GM12878 (cell line): ENCODE measurements at regions of chr11 and their contacts with region 1.

Region 1: GRCh38 chr11:61792310-61793085 is at the starts of genes FEN1 and TMEM258:
- DNase-seq: peak; percentile 76
- ATAC-seq: peak; percentile 92
- H3K4me3 ChIP-seq: peak within 1 kb of the TSS; percentile 98
- H3K27ac ChIP-seq: peak within 1 kb of the TSS; percentile 100
- H3K4me1 ChIP-seq: no peaks in the 10 kb centered on the region; the same call in 1 of the 2 replicates
- H3K27me3 ChIP-seq: no peaks in the 10 kb centered on the region
- CTCF ChIP-seq: no peak
- EP300 ChIP-seq: no peak
- POLR2A ChIP-seq: peak; percentile 98
- RAD21 ChIP-seq: no peak
- polyA plus RNA-seq, gene FEN1: 54.8 to 99.9 TPM
- polyA plus RNA-seq, gene TMEM258: 800 to 840 TPM

Region 2: GRCh38 chr11:61654397-61654829 is 138.1 kb before region 1 on chr11:
- CTCF ChIA-PET with region 1: no interaction called
- POLR2A ChIA-PET with region 1: no interaction called
- RAD21 ChIA-PET with region 1: no interaction called
- SMC1A ChIA-PET with region 1: no interaction called
- in situ Hi-C with region 1: no loop called
- intact Hi-C with region 1: no loop called
- DNase-seq: no peak
- ATAC-seq: no peak; the same call in 2 of the 3 replicates
- H3K4me3 ChIP-seq: no peak overlapping the region
- H3K27ac ChIP-seq: no peak overlapping the region
- H3K4me1 ChIP-seq: no peaks in the 10 kb centered on the region
- H3K27me3 ChIP-seq: no peaks in the 10 kb centered on the region; a peak in 2 of 4 replicates
- CTCF ChIP-seq: no peak
- EP300 ChIP-seq: no peak
- POLR2A ChIP-seq: no peak
- RAD21 ChIP-seq: no peak

Region 3: GRCh38 chr11:61733120-61733978 is 59.1 kb before region 1 on chr11:
- CTCF ChIA-PET with region 1: interaction called, 16 read pairs
- POLR2A ChIA-PET with region 1: no interaction called
- RAD21 ChIA-PET with region 1: interaction called, 6 read pairs
- SMC1A ChIA-PET with region 1: interaction called, 4 read pairs
- in situ Hi-C with region 1: no loop called
- intact Hi-C with region 1: no loop called
- DNase-seq: peak; percentile 12
- ATAC-seq: peak; percentile 95
- H3K4me3 ChIP-seq: no peak overlapping the region
- H3K27ac ChIP-seq: no peak overlapping the region
- H3K4me1 ChIP-seq: no peaks in the 10 kb centered on the region
- H3K27me3 ChIP-seq: no peaks in the 10 kb centered on the region; a peak in 1 of 4 replicates
- CTCF ChIP-seq: peak; percentile 99
- EP300 ChIP-seq: no peak
- POLR2A ChIP-seq: no peak
- RAD21 ChIP-seq: peak; percentile 80

Region 4: DNA sequence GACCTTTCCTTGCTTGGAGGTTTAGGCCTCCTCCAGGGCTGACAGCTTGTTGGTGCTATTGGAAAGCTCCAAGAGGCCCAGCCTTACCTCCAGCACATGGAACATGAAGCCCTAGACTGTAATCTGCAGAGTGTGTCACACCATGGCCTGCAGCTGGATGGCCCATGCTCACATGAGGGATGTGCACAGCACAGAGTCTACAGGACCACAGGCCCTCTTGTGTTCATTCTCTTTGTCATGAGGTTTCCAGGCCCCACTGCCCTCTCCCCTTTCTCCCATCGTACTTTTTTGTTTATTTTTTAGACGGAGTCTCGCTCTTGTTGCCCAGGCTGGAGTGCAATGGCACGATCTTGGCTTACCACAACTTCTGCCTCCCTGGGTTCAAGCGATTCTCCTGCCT is 14.3 kb after region 1 on chr11:
- CTCF ChIA-PET with region 1: interaction called, 141 read pairs
- POLR2A ChIA-PET with region 1: interaction called, 3 read pairs
- RAD21 ChIA-PET with region 1: interaction called, 19 read pairs
- SMC1A ChIA-PET with region 1: interaction called, 10 read pairs
- in situ Hi-C with region 1: no loop called
- intact Hi-C with region 1: no loop called
- DNase-seq: no peak
- ATAC-seq: no peak
- H3K4me3 ChIP-seq: no peak overlapping the region
- H3K27ac ChIP-seq: no peak overlapping the region
- H3K4me1 ChIP-seq: no peaks in the 10 kb centered on the region
- H3K27me3 ChIP-seq: no peaks in the 10 kb centered on the region
- CTCF ChIP-seq: no peak
- EP300 ChIP-seq: no peak
- POLR2A ChIP-seq: no peak
- RAD21 ChIP-seq: no peak

Region 5: GRCh38 chr11:61834278-61835048 is 42.0 kb after region 1 on chr11:
- CTCF ChIA-PET with region 1: interaction called, 75 read pairs
- POLR2A ChIA-PET with region 1: interaction called, 22 read pairs
- RAD21 ChIA-PET with region 1: interaction called, 48 read pairs
- SMC1A ChIA-PET with region 1: interaction called, 28 read pairs
- in situ Hi-C with region 1: no loop called
- intact Hi-C with region 1: loop called (anchors 2 kb)
- DNase-seq: peak; percentile 87
- ATAC-seq: peak; percentile 97
- H3K4me3 ChIP-seq: peak overlapping the region; percentile 40
- H3K27ac ChIP-seq: peak overlapping the region; percentile 95
- H3K4me1 ChIP-seq: peaks cover 36% of the 10 kb centered on the region
- H3K27me3 ChIP-seq: no peaks in the 10 kb centered on the region
- CTCF ChIP-seq: no peak
- EP300 ChIP-seq: no peak
- POLR2A ChIP-seq: peak; percentile 76
- RAD21 ChIP-seq: no peak

Region 6: GRCh38 chr11:61891331-61892084 is 99.0 kb after region 1 on chr11 and contains the start of gene FADS3:
- CTCF ChIA-PET with region 1: interaction called, 127 read pairs
- POLR2A ChIA-PET with region 1: no interaction called
- RAD21 ChIA-PET with region 1: interaction called, 63 read pairs
- SMC1A ChIA-PET with region 1: interaction called, 59 read pairs
- in situ Hi-C with region 1: loop called (anchors 5 kb)
- intact Hi-C with region 1: loop called (anchors 1 kb)
- DNase-seq: no peak
- ATAC-seq: peak; percentile 86
- H3K4me3 ChIP-seq: peak within 1 kb of the TSS; percentile 83
- H3K27ac ChIP-seq: no peak within 1 kb of the TSS
- H3K4me1 ChIP-seq: peaks cover 7% of the 10 kb centered on the region
- H3K27me3 ChIP-seq: no peaks in the 10 kb centered on the region
- CTCF ChIP-seq: no peak; a peak in 1 of 6 replicates
- EP300 ChIP-seq: no peak
- POLR2A ChIP-seq: no peak
- RAD21 ChIP-seq: no peak
- polyA plus RNA-seq, gene FADS3: 0.23 to 0.44 TPM

Region 7: DNA sequence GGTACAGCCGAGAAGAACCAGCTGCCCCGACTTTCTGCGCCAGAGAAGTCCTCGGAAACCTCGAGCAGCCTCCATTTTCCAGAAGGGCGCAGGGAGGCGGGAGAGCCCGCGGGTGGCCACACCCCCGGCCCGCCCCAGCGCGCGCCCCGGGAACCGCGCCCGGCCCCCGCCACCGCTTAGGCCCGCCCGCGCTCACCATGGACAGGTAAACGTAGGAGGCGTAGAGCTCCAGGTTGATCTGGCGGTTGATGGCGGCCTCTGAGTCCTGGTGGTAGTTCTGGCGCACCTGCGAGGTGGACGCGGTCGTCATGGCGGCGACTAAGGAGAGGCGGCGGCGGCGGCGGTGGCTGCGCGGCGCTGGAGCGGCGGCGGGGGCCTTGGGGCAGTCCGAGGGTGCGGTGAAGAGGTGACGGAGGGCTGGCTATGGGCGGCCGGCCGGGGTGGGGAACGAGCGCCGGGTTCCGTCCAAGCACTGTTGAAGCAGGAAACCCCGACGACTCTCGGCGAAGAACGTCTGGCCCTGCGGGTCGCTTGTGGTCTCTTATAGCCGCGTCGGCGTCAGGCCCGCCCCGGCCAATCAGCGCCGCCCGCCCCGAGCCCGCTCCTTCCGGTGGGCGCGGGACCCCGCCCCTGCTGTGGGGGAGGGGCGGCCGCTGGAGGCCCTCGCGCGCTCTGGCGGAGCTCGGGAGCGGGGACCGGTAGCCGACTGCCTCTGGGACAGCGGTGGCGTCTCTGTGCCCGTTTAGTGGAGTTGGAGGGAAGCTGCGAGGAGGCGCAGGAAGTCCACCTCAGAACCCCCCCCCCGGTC is 174.8 kb after region 1 on chr11 and contains the start of gene FTH1:
- CTCF ChIA-PET with region 1: interaction called, 6 read pairs
- POLR2A ChIA-PET with region 1: interaction called, 3 read pairs
- RAD21 ChIA-PET with region 1: interaction called, 7 read pairs
- SMC1A ChIA-PET with region 1: interaction called, 4 read pairs
- in situ Hi-C with region 1: no loop called
- intact Hi-C with region 1: loop called (anchors 5 kb)
- DNase-seq: no peak
- ATAC-seq: peak; percentile 72
- H3K4me3 ChIP-seq: peak within 1 kb of the TSS; percentile 100
- H3K27ac ChIP-seq: peak within 1 kb of the TSS; percentile 96
- H3K4me1 ChIP-seq: peaks cover 47% of the 10 kb centered on the region
- H3K27me3 ChIP-seq: no peaks in the 10 kb centered on the region
- CTCF ChIP-seq: no peak
- EP300 ChIP-seq: no peak
- POLR2A ChIP-seq: peak; percentile 79
- RAD21 ChIP-seq: no peak
- polyA plus RNA-seq, gene FTH1: 295 to 816 TPM